Caco-2 (cell line): ENCODE measurements at regions of chr10 and their contacts with region 1.

Region 1: GRCh38 chr10:4453950-4454349 is 372.1 kb upstream of the AKR1E2 start:
- DNase-seq: no peak
- H3K4me3 ChIP-seq: no peak overlapping the region
- H3K4me3 Mint-ChIP-seq: no peak overlapping the region
- H3K27ac Mint-ChIP-seq: no peak overlapping the region
- H3K4me1 ChIP-seq: peaks cover 28% of the 10 kb centered on the region
- H3K4me1 Mint-ChIP-seq: peaks cover 15% of the 10 kb centered on the region
- H3K27me3 ChIP-seq: no peaks in the 10 kb centered on the region
- H3K27me3 Mint-ChIP-seq: no peaks in the 10 kb centered on the region
- CTCF ChIP-seq: no peak

Region 2: DNA sequence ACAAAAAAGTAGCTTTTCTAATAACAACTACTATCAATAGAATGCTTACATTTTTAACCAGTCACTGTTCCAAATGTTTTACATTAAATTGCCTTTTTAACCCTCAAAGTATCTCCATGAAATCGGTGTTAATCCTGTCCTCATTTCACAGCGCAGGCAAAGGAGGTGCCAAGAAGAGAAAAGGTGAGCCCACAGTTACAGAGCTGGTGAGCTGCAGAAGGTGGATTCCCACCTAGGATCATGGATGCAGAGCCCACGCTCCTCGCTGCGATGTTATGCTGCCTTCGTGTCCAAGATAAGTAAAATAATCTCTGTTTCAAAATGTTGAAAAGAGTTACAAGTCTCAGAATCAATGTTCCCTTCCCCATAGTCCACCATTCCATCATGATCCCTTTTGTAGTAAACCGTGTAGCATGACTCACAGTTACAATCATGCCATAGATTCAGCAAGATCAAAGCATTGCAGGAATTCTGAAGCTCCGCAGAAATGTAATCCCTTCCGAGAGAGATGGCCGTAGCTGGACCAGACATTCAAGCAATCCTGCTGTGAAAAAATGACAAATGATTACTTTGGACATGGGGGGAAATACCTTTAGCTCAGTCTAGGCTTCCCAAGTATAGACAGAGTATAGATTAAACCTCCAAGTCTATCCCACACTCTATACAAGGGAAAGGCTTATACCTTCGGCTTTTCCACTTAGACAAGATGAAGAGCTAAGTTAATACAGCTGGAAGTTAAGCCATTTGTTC is 22.7 kb before region 1 on chr10:
- CTCF ChIA-PET with region 1: no interaction called
- POLR2A ChIA-PET with region 1: no interaction called
- intact Hi-C with region 1: loop called (anchors 2 kb)
- DNase-seq: peak; percentile 55 to 59
- H3K4me3 ChIP-seq: no peak overlapping the region
- H3K4me3 Mint-ChIP-seq: peak overlapping the region; percentile 70
- H3K27ac Mint-ChIP-seq: peak overlapping the region; percentile 86
- H3K4me1 ChIP-seq: peaks cover 19% of the 10 kb centered on the region
- H3K4me1 Mint-ChIP-seq: peaks cover 11% of the 10 kb centered on the region
- H3K27me3 ChIP-seq: no peaks in the 10 kb centered on the region
- H3K27me3 Mint-ChIP-seq: peaks cover under 1% of the 10 kb centered on the region
- CTCF ChIP-seq: no peak

Region 3: GRCh38 chr10:4474829-4475228 is 20.9 kb after region 1 on chr10:
- CTCF ChIA-PET with region 1: no interaction called
- POLR2A ChIA-PET with region 1: no interaction called
- intact Hi-C with region 1: no loop called
- DNase-seq: no peak
- H3K4me3 ChIP-seq: no peak overlapping the region
- H3K4me3 Mint-ChIP-seq: no peak overlapping the region
- H3K27ac Mint-ChIP-seq: no peak overlapping the region
- H3K4me1 ChIP-seq: no peaks in the 10 kb centered on the region; the same call in 1 of the 2 replicates
- H3K4me1 Mint-ChIP-seq: no peaks in the 10 kb centered on the region
- H3K27me3 ChIP-seq: no peaks in the 10 kb centered on the region
- H3K27me3 Mint-ChIP-seq: no peaks in the 10 kb centered on the region
- CTCF ChIP-seq: no peak

Region 4: DNA sequence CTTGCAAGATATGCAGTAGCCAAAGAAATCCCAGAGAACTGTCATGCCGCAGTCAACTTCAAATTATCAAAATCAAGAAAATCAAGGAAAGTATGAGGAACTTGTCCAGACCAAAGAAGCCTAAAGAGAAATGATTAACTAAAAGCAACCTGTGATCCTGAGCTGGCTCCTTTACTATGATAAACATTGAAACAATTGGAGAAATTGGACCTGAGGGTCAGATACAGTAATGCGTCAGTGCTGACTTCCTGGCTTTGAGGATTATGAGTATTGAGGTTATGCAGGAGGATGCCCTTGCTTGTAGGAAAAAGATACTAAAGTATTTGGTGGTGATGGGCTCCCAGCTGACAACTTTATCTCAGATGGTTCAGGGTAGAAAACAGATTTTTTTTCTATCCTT is 47.4 kb after region 1 on chr10:
- CTCF ChIA-PET with region 1: no interaction called
- POLR2A ChIA-PET with region 1: no interaction called
- intact Hi-C with region 1: no loop called
- DNase-seq: no peak
- H3K4me3 ChIP-seq: no peak overlapping the region
- H3K4me3 Mint-ChIP-seq: no peak overlapping the region
- H3K27ac Mint-ChIP-seq: no peak overlapping the region
- H3K4me1 ChIP-seq: peaks cover 10% of the 10 kb centered on the region; the same call in 1 of the 2 replicates
- H3K4me1 Mint-ChIP-seq: peaks cover 7% of the 10 kb centered on the region
- H3K27me3 ChIP-seq: no peaks in the 10 kb centered on the region
- H3K27me3 Mint-ChIP-seq: no peaks in the 10 kb centered on the region
- CTCF ChIP-seq: no peak